Tibial artery (tissue), 4 donors: ENCODE measurements at regions of chr9 and their contacts with region 1.

Region 1: DNA sequence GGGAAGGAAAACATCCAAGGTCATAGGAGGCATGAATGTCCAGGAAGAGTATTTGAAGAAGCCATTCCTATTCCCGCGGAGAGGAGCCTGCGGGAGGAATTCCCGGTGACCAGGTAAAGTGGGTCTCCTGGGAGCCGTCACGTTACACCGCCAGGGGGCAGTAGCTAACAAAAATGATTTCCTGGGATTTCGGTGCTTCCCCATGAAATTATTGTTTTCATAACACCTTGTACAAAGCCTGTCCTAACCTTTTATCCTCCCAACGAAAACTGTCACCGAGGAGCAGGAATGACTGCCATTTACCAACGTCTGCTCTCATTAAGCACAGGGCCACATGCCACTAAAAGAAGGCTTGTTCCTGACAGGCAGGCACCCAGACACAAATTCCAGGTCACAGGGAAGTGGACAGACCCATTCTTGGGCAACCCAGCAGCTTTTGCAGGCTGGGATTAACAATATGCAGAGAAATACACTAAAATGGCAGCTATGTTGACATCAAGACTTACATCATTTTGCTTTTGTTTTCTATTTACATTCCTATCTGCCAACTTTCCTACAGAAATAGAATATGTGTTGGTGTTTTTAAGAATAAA is 41.2 kb upstream of the CTSL start:
- DNase-seq: no peak
- H3K4me3 ChIP-seq: no peak overlapping the region
- H3K27ac ChIP-seq: no peak overlapping the region
- H3K4me1 ChIP-seq: peaks cover 0 to 6% (median 3%) of the 10 kb centered on the region in 4 donors
- H3K27me3 ChIP-seq: no peaks in the 10 kb centered on the region
- CTCF ChIP-seq: peak; percentile 54 to 68

Region 2: GRCh38 chr9:87812375-87813118 is 127.8 kb after region 1 on chr9:
- intact Hi-C with region 1: loop called (anchors 5 kb)
- DNase-seq: no peak
- H3K4me3 ChIP-seq: no peak overlapping the region
- H3K27ac ChIP-seq: no peak overlapping the region
- H3K4me1 ChIP-seq: no peaks in the 10 kb centered on the region
- H3K27me3 ChIP-seq: peaks cover 0 to 18% of the 10 kb centered on the region in 2 donors
- CTCF ChIP-seq: peak; percentile 69 to 89

Region 3: DNA sequence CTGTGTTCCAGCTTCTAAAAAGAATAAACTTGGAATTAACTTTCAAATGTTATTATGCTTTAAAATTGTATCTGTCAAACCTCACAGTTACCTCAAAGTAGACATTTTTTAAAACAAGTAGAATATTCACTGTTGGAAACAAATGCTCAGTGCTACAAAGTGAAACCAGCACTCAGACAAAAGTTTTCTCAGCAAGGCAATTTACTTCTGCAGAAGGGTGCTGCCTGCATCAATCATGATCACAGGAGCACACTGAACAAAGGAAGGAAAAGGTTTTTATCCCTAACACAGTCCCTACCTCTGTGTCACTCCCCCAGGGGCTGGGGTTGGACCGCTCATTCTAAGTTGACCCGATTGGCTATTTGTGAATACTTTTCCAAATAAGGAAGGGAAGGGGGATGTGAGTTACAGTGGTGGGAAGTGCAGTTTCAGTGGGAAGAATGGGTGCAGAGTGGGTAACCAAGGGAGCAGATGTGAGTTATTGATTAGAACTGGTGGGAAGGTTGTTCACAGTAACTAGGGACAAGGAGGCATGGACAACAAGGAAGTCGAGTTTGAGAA is 352.6 kb after region 1 on chr9:
- intact Hi-C with region 1: loop called (anchors 10 kb)
- DNase-seq: no peak
- H3K4me3 ChIP-seq: no peak overlapping the region
- H3K27ac ChIP-seq: no peak overlapping the region
- H3K4me1 ChIP-seq: no peaks in the 10 kb centered on the region
- H3K27me3 ChIP-seq: no peaks in the 10 kb centered on the region
- CTCF ChIP-seq: no peak